GM18951 (cell line): ENCODE measurements at regions of chr2 and their contacts with region 1.

Region 1: DNA sequence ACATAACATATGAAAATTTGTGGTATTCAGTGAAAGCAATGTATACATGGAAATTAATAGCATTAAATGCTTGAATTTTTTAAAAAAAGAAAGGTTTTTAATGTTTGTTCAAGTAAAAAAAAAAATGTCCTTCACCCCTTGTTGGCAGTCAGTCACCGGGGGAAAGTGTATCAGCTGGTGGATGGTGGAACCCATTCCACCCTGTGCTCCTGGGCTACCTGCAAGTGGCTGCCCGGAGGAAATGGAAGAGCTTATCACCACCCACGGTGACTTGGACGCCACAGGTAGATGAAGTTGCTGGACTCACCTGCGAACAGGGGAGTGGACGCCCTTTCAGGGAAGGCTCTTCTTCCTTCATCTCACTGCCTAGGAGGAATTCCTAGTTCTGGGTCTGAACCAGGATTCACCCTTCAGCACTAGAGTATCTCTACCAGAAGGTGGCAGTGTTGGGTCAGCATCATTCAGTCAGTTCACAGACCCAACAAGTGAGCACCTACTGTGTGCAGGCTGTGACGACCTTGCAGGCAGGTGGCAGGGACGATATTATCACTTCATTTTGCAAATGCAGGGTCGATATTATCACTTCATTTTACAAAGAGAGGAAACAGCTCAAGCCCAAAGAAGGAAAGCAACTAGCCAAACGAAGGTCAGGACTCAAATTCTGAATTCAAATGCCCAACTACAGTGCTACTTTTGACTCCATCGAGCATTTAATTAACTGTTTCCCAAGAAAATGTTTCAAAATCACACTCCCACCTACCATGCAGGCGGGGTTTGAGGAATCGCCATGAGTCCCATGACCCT is 35.8 kb downstream of the CIB4 start:
- POLR2A ChIP-seq: no peak

Region 2: DNA sequence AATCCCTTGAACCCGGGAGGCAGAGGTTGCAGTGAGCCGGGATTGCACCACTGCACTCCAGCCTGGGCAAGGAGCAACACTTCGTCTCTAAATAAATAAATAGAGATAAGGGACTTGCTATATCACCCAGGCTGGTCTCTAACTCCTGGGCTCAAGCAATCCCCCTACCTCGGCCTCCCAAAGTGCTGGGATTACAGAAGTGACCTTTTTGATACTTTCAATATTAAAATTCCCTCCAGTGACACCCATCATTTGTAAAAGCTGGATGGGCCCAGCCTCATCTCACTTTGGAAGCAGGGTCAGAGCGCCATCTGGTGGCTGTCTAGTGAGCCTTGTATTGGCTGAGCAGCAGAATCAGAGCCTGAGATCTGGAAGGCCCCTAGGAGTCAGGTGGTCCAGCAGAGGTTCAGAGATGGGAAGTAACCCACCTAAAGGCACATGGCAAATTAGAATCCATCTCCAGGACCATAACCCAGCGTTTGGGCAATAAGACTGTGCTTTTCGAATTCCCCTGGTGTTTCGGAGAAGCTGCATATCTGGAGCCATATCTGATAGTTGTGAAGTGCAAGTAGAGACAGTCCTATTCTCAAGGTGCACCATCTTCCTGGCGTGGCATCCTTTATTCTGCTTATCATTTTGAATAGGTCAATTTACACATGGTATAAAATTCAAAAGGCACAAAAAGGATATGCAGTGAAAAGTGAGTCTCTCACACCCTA is 140.4 kb after region 1 on chr2:
- in situ Hi-C with region 1: loop called (anchors 10 kb)
- POLR2A ChIP-seq: no peak